Activated CD4-positive, alpha-beta memory T cell treated with anti-CD3 and anti-CD28 coated beads for 36 hours (primary cell): ENCODE measurements at regions of chr20 and their contacts with region 1.

Region 1: GRCh38 chr20:5569021-5569420 is 181.2 kb upstream of the SHLD1 start:
- DNase-seq: peak; percentile 58
- H3K4me3 Mint-ChIP-seq: no peak overlapping the region
- H3K27ac Mint-ChIP-seq: peak overlapping the region; percentile 30
- H3K4me1 Mint-ChIP-seq: peaks cover 30% of the 10 kb centered on the region
- H3K27me3 Mint-ChIP-seq: no peaks in the 10 kb centered on the region

Region 2: DNA sequence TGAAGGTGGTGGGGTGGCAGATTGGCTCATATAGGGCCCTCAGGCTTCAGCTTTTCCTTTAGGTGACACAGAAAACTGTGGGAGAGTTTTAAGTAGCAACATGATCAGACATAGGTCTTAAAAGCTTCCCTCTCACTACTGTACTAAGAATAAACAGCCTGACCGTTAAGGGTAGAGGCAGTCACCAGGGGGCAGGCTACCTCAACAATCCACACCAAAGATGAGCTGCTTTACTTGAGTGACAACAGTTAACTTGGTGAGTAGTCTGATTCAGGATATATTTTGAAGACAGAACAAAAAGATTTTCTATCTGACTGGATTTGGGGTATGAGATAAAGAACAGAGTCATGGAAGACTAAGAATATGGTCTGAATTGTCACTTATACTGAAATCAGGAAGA is 11.9 kb before region 1 on chr20:
- CTCF ChIA-PET with region 1: interaction called, 20 read pairs
- POLR2A ChIA-PET with region 1: no interaction called
- intact Hi-C with region 1: no loop called
- DNase-seq: peak; percentile 79
- H3K4me3 Mint-ChIP-seq: no peak overlapping the region
- H3K27ac Mint-ChIP-seq: peak overlapping the region; percentile 21
- H3K4me1 Mint-ChIP-seq: peaks cover 5% of the 10 kb centered on the region
- H3K27me3 Mint-ChIP-seq: no peaks in the 10 kb centered on the region

Region 3: DNA sequence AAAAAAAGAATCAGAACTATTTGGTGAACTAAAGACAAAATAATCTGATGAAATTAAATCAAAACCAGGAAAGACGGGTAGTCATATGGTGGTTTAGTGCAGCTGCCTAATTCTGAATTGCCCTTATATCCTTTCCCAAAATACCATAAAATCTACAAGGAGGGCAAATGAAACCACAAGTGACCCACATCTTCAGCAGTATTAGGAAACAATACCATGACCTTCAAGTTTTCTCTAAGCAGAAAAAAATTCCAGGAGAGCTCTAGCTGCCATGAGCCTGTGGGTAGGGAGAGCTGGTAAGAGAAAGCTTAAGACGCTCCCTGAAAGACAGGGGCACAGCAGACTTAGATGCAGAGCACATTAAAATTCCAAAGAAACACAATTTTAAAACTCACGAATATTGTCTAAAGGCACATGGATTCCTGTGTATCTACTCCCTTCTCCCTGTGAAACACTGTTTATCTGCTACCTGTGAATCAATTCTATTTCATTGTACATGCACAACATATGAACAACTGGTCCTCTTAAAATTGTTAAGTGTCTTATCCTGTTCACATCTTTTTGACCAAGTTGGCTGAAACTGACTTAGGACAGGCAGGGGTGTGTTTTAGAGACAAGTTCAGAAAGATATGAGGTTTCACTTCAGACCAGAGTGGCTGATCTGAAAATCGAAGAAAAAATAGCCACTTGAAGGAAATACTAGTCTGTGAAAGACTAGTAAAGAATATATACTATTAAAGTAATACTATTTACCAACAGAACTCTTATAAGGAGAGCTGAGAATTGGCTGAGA is 27.6 kb after region 1 on chr20:
- CTCF ChIA-PET with region 1: interaction called, 13 read pairs
- POLR2A ChIA-PET with region 1: no interaction called
- intact Hi-C with region 1: no loop called
- DNase-seq: no peak
- H3K4me3 Mint-ChIP-seq: no peak overlapping the region
- H3K27ac Mint-ChIP-seq: peak overlapping the region; percentile 66
- H3K4me1 Mint-ChIP-seq: peaks cover 66% of the 10 kb centered on the region
- H3K27me3 Mint-ChIP-seq: no peaks in the 10 kb centered on the region

Region 4: GRCh38 chr20:5608442-5609161 is 39.6 kb after region 1 on chr20:
- CTCF ChIA-PET with region 1: interaction called, 13 read pairs
- POLR2A ChIA-PET with region 1: interaction called, 3 read pairs
- intact Hi-C with region 1: no loop called
- DNase-seq: no peak
- H3K4me3 Mint-ChIP-seq: peak overlapping the region; percentile 87
- H3K27ac Mint-ChIP-seq: peak overlapping the region; percentile 98
- H3K4me1 Mint-ChIP-seq: peaks cover 52% of the 10 kb centered on the region
- H3K27me3 Mint-ChIP-seq: no peaks in the 10 kb centered on the region

Region 5: GRCh38 chr20:5779071-5779900 is 210.3 kb after region 1 on chr20:
- CTCF ChIA-PET with region 1: interaction called, 36 read pairs
- POLR2A ChIA-PET with region 1: no interaction called
- intact Hi-C with region 1: no loop called
- DNase-seq: no peak
- H3K4me3 Mint-ChIP-seq: no peak overlapping the region
- H3K27ac Mint-ChIP-seq: no peak overlapping the region
- H3K4me1 Mint-ChIP-seq: peaks cover 13% of the 10 kb centered on the region
- H3K27me3 Mint-ChIP-seq: no peaks in the 10 kb centered on the region

Region 6: DNA sequence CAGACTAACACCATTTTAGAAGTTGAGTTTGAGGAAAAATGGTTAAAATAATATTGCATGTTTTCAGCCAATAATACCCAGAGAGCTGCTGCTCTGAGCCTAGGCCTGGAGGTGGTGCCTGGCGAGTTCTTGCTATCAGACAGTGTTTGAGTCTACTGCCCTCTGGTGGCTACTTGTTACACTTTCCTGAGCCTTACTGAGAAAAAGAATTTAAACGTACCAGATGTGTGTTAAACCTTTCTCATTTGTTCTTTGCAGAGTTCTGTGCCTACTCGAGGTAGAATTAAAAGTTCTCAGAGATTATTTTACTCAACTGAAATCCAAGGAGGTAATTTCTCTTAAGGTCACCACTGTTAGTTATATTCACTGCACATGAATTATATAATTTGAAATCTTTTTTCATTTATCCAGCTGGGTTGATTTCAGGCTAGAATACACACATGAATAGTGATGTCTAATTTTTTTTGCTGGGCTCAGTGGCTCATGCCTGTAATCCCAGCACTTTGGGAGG is 219.4 kb after region 1 on chr20:
- CTCF ChIA-PET with region 1: interaction called, 140 read pairs
- POLR2A ChIA-PET with region 1: interaction called, 3 read pairs
- intact Hi-C with region 1: loop called (anchors 1 kb)
- DNase-seq: peak; percentile 77
- H3K4me3 Mint-ChIP-seq: no peak overlapping the region
- H3K27ac Mint-ChIP-seq: peak overlapping the region; percentile 39
- H3K4me1 Mint-ChIP-seq: peaks cover 13% of the 10 kb centered on the region
- H3K27me3 Mint-ChIP-seq: no peaks in the 10 kb centered on the region